AG04449 (cell line): ENCODE measurements at regions of chr4 and their contacts with region 1.

Region 1: DNA sequence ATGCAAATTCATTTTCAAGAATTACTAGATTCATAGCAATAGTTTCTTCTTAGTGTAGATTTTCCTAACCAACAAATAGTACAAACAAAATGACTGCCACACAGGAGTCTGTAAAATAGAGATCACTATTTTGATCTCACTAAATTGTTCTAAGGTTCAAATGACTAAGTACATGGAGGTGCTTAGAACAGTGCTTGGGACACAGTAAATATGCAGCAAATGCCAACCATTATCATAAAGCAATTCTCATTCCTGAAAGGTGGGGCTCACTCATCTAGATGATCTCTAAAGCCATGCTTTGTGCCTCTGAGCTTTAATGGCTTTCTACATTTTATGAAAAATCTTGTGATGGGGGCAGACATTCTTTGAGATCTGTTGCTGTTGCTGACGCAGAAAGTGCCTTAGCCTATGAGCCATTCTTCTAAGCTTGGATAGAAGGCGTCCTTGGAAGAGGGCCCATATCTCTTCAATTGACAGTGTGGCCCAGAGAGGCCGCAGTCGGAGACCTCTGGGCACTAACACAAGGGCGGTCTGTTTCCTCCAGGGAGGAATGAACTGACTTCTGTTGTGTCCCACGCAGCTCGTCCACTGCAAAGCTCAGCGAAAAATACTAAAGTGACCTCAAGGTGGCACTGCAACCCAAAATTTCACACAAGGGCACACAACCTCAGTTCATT is 23.5 kb downstream of the TLR10 start:
- DNase-seq: no peak
- H3K4me3 ChIP-seq: no peak overlapping the region
- CTCF ChIP-seq: peak; percentile 56

Region 2: GRCh38 chr4:38782452-38783108 is 23.3 kb after region 1 on chr4 and contains the start of gene TLR10:
- CTCF ChIA-PET with region 1: interaction called, 125 read pairs
- POLR2A ChIA-PET with region 1: no interaction called
- DNase-seq: no peak
- H3K4me3 ChIP-seq: no peak within 1 kb of the TSS
- CTCF ChIP-seq: peak; percentile 47

Region 3: GRCh38 chr4:38795087-38795486 is 35.8 kb after region 1 on chr4:
- CTCF ChIA-PET with region 1: interaction called, 75 read pairs
- POLR2A ChIA-PET with region 1: no interaction called
- DNase-seq: no peak
- H3K4me3 ChIP-seq: no peak overlapping the region
- CTCF ChIP-seq: no peak

Region 4: GRCh38 chr4:38856524-38857337 is 97.5 kb after region 1 on chr4 and contains the start of gene TLR6:
- CTCF ChIA-PET with region 1: interaction called, 30 read pairs
- POLR2A ChIA-PET with region 1: no interaction called
- DNase-seq: no peak
- H3K4me3 ChIP-seq: peak within 1 kb of the TSS; percentile 39
- CTCF ChIP-seq: peak; percentile 50

Region 5: DNA sequence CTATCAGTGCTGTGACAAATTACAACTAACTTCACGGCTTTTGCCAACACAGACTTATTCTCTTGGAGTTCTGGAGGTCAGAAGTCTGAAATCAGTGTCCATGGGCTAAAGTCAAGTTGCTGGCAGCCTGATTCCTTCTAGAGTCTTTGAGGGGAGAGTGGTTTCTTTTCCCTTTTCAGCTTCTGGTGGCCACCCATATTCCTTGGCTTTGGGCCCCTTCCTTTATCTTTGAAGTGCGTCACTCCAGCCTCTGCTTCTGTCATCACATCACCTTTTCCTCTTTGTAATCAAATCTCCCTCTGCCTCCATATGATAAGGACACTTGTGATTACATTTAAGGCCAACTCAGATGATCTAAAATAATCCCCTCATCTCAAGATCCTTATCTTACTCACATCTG is 117.4 kb after region 1 on chr4:
- CTCF ChIA-PET with region 1: interaction called, 10 read pairs
- POLR2A ChIA-PET with region 1: no interaction called
- DNase-seq: no peak
- H3K4me3 ChIP-seq: no peak overlapping the region
- CTCF ChIP-seq: no peak

Region 6: DNA sequence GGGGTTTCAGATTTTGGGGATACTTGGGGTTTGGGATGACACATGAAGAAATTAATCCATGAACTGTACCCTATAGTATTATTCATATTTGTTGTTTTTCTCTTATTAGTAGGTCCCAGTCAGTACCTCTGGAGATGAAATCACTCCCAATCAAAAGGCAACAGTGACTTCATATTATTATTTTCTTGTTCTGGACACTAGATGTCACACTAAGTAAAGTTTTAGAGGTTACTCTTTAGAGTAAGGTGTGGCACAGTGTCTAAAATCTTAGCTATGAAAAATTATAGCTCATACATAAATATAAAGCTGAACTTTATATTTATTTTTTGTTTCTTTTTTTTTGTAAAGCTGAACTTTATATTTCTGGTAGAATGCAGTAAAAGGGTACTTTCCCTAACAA is 143.4 kb after region 1 on chr4:
- CTCF ChIA-PET with region 1: interaction called, 17 read pairs
- POLR2A ChIA-PET with region 1: no interaction called
- DNase-seq: no peak
- H3K4me3 ChIP-seq: no peak overlapping the region
- CTCF ChIP-seq: no peak

Region 7: DNA sequence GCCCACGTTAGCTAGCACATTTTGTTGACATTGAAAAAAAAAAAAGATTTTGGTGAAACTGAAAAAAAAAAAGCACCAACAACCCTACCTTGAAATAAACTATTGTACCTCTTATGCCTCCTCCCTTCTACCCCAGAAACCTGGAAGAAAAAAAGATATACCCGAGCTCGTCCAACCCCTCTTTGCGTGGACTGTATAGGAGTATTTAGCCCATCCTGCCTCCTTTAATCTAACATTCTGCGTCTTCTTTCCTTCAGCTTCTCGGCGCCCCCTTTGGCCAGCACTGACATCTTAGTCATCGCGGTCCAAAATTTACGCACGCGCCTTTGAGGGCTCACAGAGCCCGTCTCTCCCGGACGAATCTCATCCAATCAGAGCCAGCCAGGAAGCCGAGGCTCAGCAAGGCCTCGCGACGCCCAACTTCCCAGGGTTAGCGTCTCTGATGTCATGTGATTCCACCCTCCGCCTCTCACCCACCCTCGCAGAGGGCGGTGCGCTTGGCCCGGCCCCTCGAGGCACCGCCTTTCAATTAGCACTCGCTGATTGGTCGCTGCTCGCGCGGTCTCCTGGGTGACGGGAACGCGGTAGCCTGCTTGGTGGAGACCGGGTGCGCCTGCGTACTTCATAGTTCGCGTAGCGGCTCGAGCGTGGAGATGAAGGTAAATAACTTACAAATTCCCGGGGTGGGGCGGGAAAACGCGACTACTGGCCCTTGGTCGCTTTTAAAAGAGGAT is 422.8 kb after region 1 on chr4 and contains the start of gene WDR19:
- CTCF ChIA-PET with region 1: interaction called, 10 read pairs
- POLR2A ChIA-PET with region 1: no interaction called
- DNase-seq: peak; percentile 93
- H3K4me3 ChIP-seq: peak within 1 kb of the TSS; percentile 92
- CTCF ChIP-seq: peak; percentile 54